H1 (cell line): ENCODE measurements at regions of chr2 and their contacts with region 1.

Region 1: GRCh38 chr2:196453613-196454047 is 185.9 kb upstream of the CCDC150 start:
- DNase-seq: peak in 1 of 2 experiments; percentile 5
- H3K4me3 ChIP-seq: no peak overlapping the region
- H3K27ac ChIP-seq: no peak overlapping the region
- H3K4me1 ChIP-seq: no peaks in the 10 kb centered on the region
- H3K27me3 ChIP-seq: no peaks in the 10 kb centered on the region
- CTCF ChIP-seq: peak; percentile 7 to 68 (median 62)
- EP300 ChIP-seq: no peak
- POLR2A ChIP-seq: no peak
- RAD21 ChIP-seq: peak; percentile 80 to 84

Region 2: DNA sequence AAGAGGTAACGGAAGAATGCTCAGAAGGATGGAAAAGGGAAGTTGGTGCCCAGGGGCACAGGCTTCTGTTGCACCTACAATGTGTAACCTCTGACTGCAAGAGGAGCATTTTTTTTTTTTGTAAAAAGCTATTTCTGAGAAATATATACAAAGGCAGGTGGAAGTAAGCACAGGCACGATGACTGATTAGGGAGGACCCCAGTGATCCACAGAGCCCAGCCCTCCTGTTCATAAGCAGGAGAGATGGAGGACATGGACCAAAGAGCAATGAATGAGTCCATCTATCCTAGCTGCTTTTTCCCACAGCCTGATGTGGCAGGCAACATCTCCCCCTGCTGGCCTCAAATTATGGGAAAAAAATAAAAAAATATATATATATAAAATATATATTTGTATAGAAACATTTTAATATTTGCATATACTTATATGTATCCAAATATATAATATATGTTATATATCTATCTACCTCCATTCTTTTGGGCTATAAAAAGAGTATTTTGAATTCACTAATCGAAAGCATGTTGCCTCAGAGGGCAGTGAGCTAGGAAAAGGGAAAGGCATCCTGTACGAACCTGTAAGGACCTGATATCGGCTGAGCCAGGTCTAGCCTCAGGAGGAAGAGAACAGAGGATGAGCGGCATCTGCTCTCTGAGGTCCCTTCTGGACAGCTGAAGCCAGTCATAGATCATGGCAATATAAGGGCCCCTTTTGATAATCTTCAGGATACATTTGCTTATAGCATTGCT is 116.2 kb before region 1 on chr2:
- CTCF ChIA-PET with region 1: interaction called, 16 read pairs
- POLR2A ChIA-PET with region 1: no interaction called
- DNase-seq: no peak
- H3K4me3 ChIP-seq: no peak overlapping the region
- H3K27ac ChIP-seq: no peak overlapping the region
- H3K4me1 ChIP-seq: no peaks in the 10 kb centered on the region
- H3K27me3 ChIP-seq: no peaks in the 10 kb centered on the region
- CTCF ChIP-seq: peak in 2 of 3 experiments; percentile 29 to 46; a peak in 2 of 4 replicates
- EP300 ChIP-seq: no peak
- POLR2A ChIP-seq: no peak
- RAD21 ChIP-seq: peak; percentile 64 to 65

Region 3: GRCh38 chr2:196421880-196422279 is 31.8 kb before region 1 on chr2:
- CTCF ChIA-PET with region 1: interaction called, 13 read pairs
- POLR2A ChIA-PET with region 1: no interaction called
- DNase-seq: no peak
- H3K4me3 ChIP-seq: no peak overlapping the region
- H3K27ac ChIP-seq: no peak overlapping the region
- H3K4me1 ChIP-seq: no peaks in the 10 kb centered on the region
- H3K27me3 ChIP-seq: no peaks in the 10 kb centered on the region
- CTCF ChIP-seq: no peak
- EP300 ChIP-seq: no peak
- POLR2A ChIP-seq: no peak
- RAD21 ChIP-seq: no peak

Region 4: GRCh38 chr2:196439760-196440159 is 13.9 kb before region 1 on chr2:
- CTCF ChIA-PET with region 1: interaction called, 30 read pairs
- POLR2A ChIA-PET with region 1: interaction called, 4 read pairs
- DNase-seq: no peak
- H3K4me3 ChIP-seq: no peak overlapping the region
- H3K27ac ChIP-seq: no peak overlapping the region
- H3K4me1 ChIP-seq: no peaks in the 10 kb centered on the region
- H3K27me3 ChIP-seq: no peaks in the 10 kb centered on the region
- CTCF ChIP-seq: no peak
- EP300 ChIP-seq: no peak
- POLR2A ChIP-seq: no peak
- RAD21 ChIP-seq: no peak

Region 5: GRCh38 chr2:196473617-196474016 is 20.0 kb after region 1 on chr2:
- CTCF ChIA-PET with region 1: interaction called, 44 read pairs
- POLR2A ChIA-PET with region 1: no interaction called
- DNase-seq: no peak
- H3K4me3 ChIP-seq: no peak overlapping the region
- H3K27ac ChIP-seq: no peak overlapping the region
- H3K4me1 ChIP-seq: no peaks in the 10 kb centered on the region
- H3K27me3 ChIP-seq: no peaks in the 10 kb centered on the region
- CTCF ChIP-seq: no peak
- EP300 ChIP-seq: no peak
- POLR2A ChIP-seq: no peak
- RAD21 ChIP-seq: no peak

Region 6: GRCh38 chr2:196500684-196501431 is 47.2 kb after region 1 on chr2:
- CTCF ChIA-PET with region 1: no interaction called
- POLR2A ChIA-PET with region 1: no interaction called
- DNase-seq: no peak
- H3K4me3 ChIP-seq: no peak overlapping the region
- H3K27ac ChIP-seq: no peak overlapping the region
- H3K4me1 ChIP-seq: no peaks in the 10 kb centered on the region
- H3K27me3 ChIP-seq: no peaks in the 10 kb centered on the region
- CTCF ChIP-seq: no peak
- EP300 ChIP-seq: no peak
- POLR2A ChIP-seq: no peak
- RAD21 ChIP-seq: no peak

Region 7: GRCh38 chr2:196592912-196593881 is 139.6 kb after region 1 on chr2:
- CTCF ChIA-PET with region 1: interaction called, 16 read pairs
- POLR2A ChIA-PET with region 1: no interaction called
- DNase-seq: peak in 1 of 2 experiments; percentile 77
- H3K4me3 ChIP-seq: peak within 1 kb of the TSS; percentile 63 to 81 (median 72)
- H3K27ac ChIP-seq: no peak within 1 kb of the TSS
- H3K4me1 ChIP-seq: peaks cover 0 to 3% (median 1%) of the 10 kb centered on the region in 4 experiments; a peak in 3 of 7 replicates
- H3K27me3 ChIP-seq: peaks cover 4 to 25% (median 17%) of the 10 kb centered on the region in 4 experiments
- CTCF ChIP-seq: peak in 1 of 3 experiments; percentile 16; a peak in 1 of 4 replicates
- EP300 ChIP-seq: no peak
- POLR2A ChIP-seq: peak; percentile 66 to 79
- RAD21 ChIP-seq: peak in 1 of 2 experiments; percentile 2; a peak in 1 of 4 replicates